AG04449 (cell line): ENCODE measurements at regions of chr14 and their contacts with region 1.

Region 1: GRCh38 chr14:99683619-99684355 is at the start of gene CYP46A1:
- DNase-seq: peak; percentile 92
- H3K4me3 ChIP-seq: peak within 1 kb of the TSS; percentile 80
- CTCF ChIP-seq: no peak

Region 2: GRCh38 chr14:99667821-99668220 is 16.0 kb before region 1 on chr14:
- CTCF ChIA-PET with region 1: interaction called, 20 read pairs
- POLR2A ChIA-PET with region 1: no interaction called
- DNase-seq: no peak
- H3K4me3 ChIP-seq: no peak overlapping the region
- CTCF ChIP-seq: no peak

Region 3: DNA sequence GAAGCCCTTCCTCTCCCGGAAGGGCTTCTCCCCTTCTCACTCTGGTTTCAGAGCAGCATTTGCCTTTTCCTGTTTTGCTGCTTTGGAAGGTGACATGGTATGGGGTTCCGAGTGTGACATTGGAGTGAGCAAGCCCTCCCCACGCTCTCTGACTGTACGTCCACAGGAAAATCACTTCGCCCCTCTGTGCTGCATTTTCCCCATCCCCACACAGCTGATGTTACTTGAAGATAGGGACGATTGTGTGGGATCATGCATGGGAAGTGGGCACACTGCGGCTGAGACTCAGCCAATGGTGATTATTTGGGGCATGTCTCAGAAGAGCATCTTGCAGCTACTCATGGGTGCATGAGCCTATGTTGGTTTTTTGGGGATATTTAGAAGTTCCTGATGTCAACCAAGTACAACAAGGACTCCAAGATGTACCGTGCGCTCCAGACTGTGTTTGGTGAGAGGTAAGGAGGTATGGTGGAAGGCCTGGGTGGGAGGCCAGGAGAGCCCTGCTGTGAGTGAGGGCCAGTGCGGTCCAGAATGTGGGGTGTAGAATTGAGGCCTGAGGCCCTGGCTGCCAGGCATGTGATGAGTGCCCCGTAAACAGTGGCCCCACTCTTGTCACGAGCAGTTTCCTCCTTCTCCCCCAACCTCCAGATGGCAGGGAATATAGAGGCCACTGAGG is 15.4 kb after region 1 on chr14:
- CTCF ChIA-PET with region 1: interaction called, 13 read pairs
- POLR2A ChIA-PET with region 1: no interaction called
- DNase-seq: no peak
- H3K4me3 ChIP-seq: no peak overlapping the region
- CTCF ChIP-seq: no peak

Region 4: DNA sequence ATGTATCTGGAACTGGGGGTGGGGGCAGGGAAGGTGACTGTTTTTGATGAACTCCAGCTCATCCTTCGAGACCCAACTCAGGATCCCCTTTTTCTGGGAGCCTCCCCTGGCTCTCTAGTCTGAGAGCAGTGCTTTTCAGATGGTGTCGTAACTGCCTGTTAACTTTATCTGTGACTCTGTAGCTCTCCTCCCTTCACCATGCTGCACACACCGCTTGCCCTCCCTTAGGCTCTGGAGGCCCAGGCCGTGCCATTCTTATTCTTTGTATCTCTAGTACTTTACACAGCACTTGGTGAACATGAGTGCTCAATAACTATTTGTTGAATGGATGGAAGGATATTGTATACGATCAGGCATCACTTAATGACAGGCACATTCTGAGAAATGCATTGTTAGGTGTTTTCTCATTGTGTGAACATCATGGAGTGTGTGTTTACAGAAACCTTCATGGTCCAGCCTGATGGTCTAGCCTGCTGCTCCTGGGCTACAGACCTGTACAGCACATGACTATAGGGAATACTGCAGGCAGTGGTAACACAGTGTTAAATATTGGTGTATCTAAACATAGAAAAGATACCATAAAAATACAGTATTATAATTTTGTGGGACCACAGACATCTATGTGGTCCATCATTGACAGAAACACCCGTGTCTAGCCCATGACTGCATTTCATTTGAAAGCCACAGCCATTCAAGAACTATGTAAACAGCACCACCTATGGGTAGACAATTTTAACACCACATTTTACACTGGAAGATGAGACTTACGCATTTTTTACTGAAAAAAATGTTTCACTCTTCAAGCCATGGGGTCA is 201.3 kb after region 1 on chr14:
- CTCF ChIA-PET with region 1: interaction called, 134 read pairs
- POLR2A ChIA-PET with region 1: no interaction called
- DNase-seq: no peak
- H3K4me3 ChIP-seq: no peak overlapping the region
- CTCF ChIP-seq: peak; percentile 42